ENCODE measurements at regions of chr12 and their contacts with region 1.

Region 1: DNA sequence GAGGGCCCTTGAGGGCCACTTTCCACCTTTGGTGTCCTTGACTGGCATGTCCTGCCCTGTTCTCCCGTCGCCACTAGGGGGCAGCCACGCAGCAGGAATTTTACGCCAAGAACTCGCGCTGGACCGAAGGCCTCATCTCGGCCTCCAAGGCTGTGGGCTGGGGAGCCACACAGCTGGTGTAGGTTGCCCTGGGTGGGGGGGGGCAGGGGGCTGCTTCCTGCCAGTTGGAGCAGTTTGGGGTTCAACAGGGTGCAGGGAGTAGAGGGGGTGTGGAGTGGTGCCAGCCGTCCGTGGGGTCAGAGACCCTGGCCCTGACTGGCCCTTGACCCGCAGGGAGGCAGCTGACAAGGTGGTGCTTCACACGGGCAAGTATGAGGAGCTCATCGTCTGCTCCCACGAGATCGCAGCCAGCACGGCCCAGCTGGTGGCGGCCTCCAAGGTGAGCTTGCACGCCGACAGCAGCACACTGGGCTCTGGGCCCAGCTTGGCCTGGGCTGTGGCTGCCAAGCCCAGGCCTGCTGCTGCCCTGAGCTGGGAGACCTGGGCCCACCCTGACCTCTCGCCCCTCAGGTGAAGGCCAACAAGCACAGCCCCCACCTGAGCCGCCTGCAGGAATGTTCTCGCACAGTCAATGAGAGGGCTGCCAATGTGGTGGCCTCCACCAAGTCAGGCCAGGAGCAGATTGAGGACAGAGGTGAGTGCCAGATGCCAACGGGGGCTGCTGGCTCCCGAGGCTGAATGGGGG is 25.3 kb downstream of the HIP1R start:
- DNase-seq: no peak
- ATAC-seq: peak; percentile 85
- H3K4me3 ChIP-seq: no peak overlapping the region
- H3K27ac ChIP-seq: no peak overlapping the region
- H3K4me1 ChIP-seq: no peaks in the 10 kb centered on the region
- H3K27me3 ChIP-seq: no peaks in the 10 kb centered on the region
- CTCF ChIP-seq: peak; percentile 87 to 93 (median 91)
- EP300 ChIP-seq: no peak
- POLR2A ChIP-seq: no peak
- RAD21 ChIP-seq: peak; percentile 99

Region 2: GRCh38 chr12:122691575-122691965 is 168.9 kb before region 1 on chr12:
- CTCF ChIA-PET with region 1: no interaction called
- POLR2A ChIA-PET with region 1: no interaction called
- RAD21 ChIA-PET with region 1: no interaction called
- SMC1A ChIA-PET with region 1: no interaction called
- in situ Hi-C with region 1: no loop called
- intact Hi-C with region 1: no loop called
- DNase-seq: no peak
- ATAC-seq: no peak
- H3K4me3 ChIP-seq: no peak overlapping the region
- H3K27ac ChIP-seq: no peak overlapping the region
- H3K4me1 ChIP-seq: no peaks in the 10 kb centered on the region
- H3K27me3 ChIP-seq: no peaks in the 10 kb centered on the region
- CTCF ChIP-seq: no peak
- EP300 ChIP-seq: no peak
- POLR2A ChIP-seq: no peak
- RAD21 ChIP-seq: no peak

Region 3: DNA sequence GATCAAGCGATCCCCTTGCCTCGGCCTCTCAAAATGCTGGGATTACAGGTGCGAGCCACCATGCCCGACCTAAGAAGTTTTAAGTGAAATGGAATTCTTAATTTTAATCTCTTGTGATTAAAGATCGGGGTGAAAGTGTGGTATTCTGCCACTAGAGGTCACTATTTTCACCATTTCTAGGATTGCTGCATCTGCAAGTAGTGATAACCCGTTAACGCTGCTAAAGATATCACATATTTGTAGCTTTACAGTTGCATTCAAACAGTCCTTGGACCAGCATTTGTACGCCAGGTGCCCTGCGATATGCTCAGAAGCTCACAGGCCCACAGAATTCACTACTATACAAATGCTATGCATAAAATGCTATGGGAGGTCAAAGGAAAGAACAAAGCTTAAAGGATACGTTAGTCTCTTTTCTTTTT is 66.8 kb before region 1 on chr12:
- CTCF ChIA-PET with region 1: interaction called, 41 read pairs
- POLR2A ChIA-PET with region 1: no interaction called
- RAD21 ChIA-PET with region 1: interaction called, 20 read pairs
- SMC1A ChIA-PET with region 1: interaction called, 4 read pairs
- in situ Hi-C with region 1: no loop called
- intact Hi-C with region 1: loop called (anchors 2 kb)
- DNase-seq: no peak
- ATAC-seq: peak; percentile 88
- H3K4me3 ChIP-seq: no peak overlapping the region
- H3K27ac ChIP-seq: no peak overlapping the region
- H3K4me1 ChIP-seq: no peaks in the 10 kb centered on the region
- H3K27me3 ChIP-seq: no peaks in the 10 kb centered on the region
- CTCF ChIP-seq: peak; percentile 53 to 67 (median 64); a peak in 5 of 6 replicates
- EP300 ChIP-seq: no peak
- POLR2A ChIP-seq: no peak
- RAD21 ChIP-seq: peak; percentile 74

Region 4: GRCh38 chr12:122880668-122881067 is 20.1 kb after region 1 on chr12:
- CTCF ChIA-PET with region 1: interaction called, 26 read pairs
- POLR2A ChIA-PET with region 1: no interaction called
- RAD21 ChIA-PET with region 1: interaction called, 4 read pairs
- SMC1A ChIA-PET with region 1: interaction called, 5 read pairs
- in situ Hi-C with region 1: no loop called
- intact Hi-C with region 1: no loop called
- DNase-seq: no peak
- ATAC-seq: peak; percentile 60
- H3K4me3 ChIP-seq: no peak overlapping the region
- H3K27ac ChIP-seq: no peak overlapping the region
- H3K4me1 ChIP-seq: peaks cover 25% of the 10 kb centered on the region
- H3K27me3 ChIP-seq: no peaks in the 10 kb centered on the region; a peak in 1 of 4 replicates
- CTCF ChIP-seq: peak; percentile 43; a peak in 5 of 6 replicates
- EP300 ChIP-seq: no peak
- POLR2A ChIP-seq: no peak
- RAD21 ChIP-seq: peak; percentile 52

Region 5: GRCh38 chr12:122895705-122896636 is 35.5 kb after region 1 on chr12 and contains the start of gene VPS37B:
- CTCF ChIA-PET with region 1: interaction called, 18 read pairs
- POLR2A ChIA-PET with region 1: no interaction called
- RAD21 ChIA-PET with region 1: interaction called, 13 read pairs
- SMC1A ChIA-PET with region 1: interaction called, 10 read pairs
- in situ Hi-C with region 1: no loop called
- intact Hi-C with region 1: no loop called
- DNase-seq: no peak
- ATAC-seq: peak; percentile 38
- H3K4me3 ChIP-seq: peak within 1 kb of the TSS; percentile 69
- H3K27ac ChIP-seq: peak within 1 kb of the TSS; percentile 34
- H3K4me1 ChIP-seq: peaks cover 44% of the 10 kb centered on the region
- H3K27me3 ChIP-seq: no peaks in the 10 kb centered on the region
- CTCF ChIP-seq: no peak
- EP300 ChIP-seq: peak; percentile 45 to 57; a peak in 2 of 4 replicates
- POLR2A ChIP-seq: peak; percentile 93
- RAD21 ChIP-seq: no peak
- polyA plus RNA-seq, gene VPS37B: 0.66 to 1.7 TPM

Region 6: GRCh38 chr12:122946690-122947341 is 86.3 kb after region 1 on chr12:
- CTCF ChIA-PET with region 1: interaction called, 127 read pairs
- POLR2A ChIA-PET with region 1: no interaction called
- RAD21 ChIA-PET with region 1: interaction called, 72 read pairs
- SMC1A ChIA-PET with region 1: interaction called, 100 read pairs
- in situ Hi-C with region 1: loop called (anchors 5 kb)
- intact Hi-C with region 1: loop called (anchors 1 kb)
- DNase-seq: peak; percentile 59
- ATAC-seq: peak; percentile 84
- H3K4me3 ChIP-seq: no peak overlapping the region
- H3K27ac ChIP-seq: peak overlapping the region; percentile 27; the same call in 1 of the 2 replicates
- H3K4me1 ChIP-seq: peaks cover 31% of the 10 kb centered on the region
- H3K27me3 ChIP-seq: no peaks in the 10 kb centered on the region
- CTCF ChIP-seq: peak; percentile 24 to 29 (median 29); a peak in 4 of 6 replicates
- EP300 ChIP-seq: peak; percentile 17 to 44; a peak in 2 of 4 replicates
- POLR2A ChIP-seq: no peak
- RAD21 ChIP-seq: no peak